Common myeloid progenitor, CD34-positive (primary cell): ENCODE measurements at regions of chr2 and their contacts with region 1.

Region 1: DNA sequence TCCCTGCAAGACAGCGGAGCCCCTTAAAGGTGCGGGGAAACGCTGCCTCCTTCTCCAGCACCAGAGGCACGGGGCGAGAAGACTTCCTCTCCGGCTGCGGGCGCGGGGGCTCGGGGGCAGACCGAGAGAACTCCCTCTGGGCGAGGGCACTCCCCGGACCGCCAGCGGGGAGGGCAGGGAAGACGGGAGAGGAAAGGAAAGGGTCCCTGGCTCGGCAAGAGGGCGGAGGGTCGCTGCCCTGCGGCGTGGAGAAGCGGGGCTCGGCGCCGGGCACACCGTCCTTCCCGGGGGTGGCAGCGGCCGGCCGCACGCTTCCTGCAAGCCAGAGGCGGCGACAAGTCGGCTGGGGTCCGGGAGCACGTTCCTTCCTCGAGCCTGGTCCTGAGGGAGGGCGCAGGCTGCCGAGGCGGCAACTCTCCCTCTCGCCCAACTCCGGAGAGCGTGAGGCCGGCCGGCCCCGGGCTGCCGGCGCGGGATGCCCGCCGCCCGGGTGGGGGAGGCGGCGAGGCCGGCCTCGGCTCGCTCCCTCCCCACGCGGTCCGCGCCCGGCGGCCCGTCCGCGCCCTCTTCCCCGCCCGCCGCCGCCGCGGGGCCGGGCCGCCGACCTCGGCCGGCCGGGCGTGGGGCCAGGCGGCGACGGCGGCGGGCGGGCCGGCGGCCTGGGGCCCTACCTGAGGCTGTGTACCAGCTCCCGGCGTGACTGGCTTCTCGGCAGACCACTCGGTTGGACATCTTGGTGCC is 1.1 kb downstream of the MEMO1 start:
- DNase-seq: peak in 2 of 3 donors; percentile 35 to 71
- H3K4me3 ChIP-seq: peak overlapping the region; percentile 84 to 92 (median 90)
- H3K27ac ChIP-seq: peak overlapping the region; percentile 58 to 87
- H3K4me1 ChIP-seq: peaks cover 24 to 29% (median 27%) of the 10 kb centered on the region in 4 experiments
- H3K27me3 ChIP-seq: no peaks in the 10 kb centered on the region

Region 2: DNA sequence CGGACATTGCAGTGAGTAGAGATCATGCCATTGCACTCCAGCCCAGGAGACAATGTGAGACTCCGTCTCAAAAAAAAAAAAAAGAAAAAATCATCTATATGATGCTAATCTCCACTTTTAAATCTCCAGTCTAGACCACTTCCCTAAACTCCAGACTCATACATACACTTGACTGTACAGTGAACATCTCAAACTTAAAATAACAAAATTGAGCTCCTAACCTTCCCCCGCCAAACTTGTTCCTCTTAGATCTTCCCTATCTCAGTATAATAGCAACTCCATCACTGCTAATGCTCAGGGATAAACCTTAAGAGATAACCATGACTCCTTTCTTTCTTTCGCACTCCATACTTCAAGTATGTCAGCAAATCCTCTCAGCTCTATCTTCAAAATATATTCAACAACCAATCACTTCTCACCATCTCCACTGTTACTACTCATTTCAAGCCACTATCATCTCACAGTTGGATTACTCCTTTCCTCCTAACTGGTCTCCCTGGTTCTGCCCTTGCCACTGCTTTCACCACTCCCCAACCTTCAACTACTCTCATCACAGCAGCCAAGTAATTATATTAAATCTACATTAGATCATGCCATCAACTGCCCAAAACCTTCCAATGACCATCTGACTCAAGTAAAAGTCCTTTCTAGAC is 10.8 kb before region 1 on chr2:
- CTCF ChIA-PET with region 1: interaction called, 13 read pairs
- POLR2A ChIA-PET with region 1: no interaction called
- DNase-seq: peak in 2 of 3 donors; percentile 55 to 72
- H3K4me3 ChIP-seq: no peak overlapping the region
- H3K27ac ChIP-seq: peak overlapping the region in 1 of 2 experiments; percentile 25
- H3K4me1 ChIP-seq: peaks cover 2 to 26% (median 7%) of the 10 kb centered on the region in 4 experiments
- H3K27me3 ChIP-seq: no peaks in the 10 kb centered on the region

Region 3: GRCh38 chr2:32166115-32166574 is 156.5 kb after region 1 on chr2:
- CTCF ChIA-PET with region 1: no interaction called
- POLR2A ChIA-PET with region 1: no interaction called
- DNase-seq: no peak
- H3K4me3 ChIP-seq: peak overlapping the region; percentile 91 to 98 (median 94)
- H3K27ac ChIP-seq: peak overlapping the region; percentile 80 to 94
- H3K4me1 ChIP-seq: peaks cover 2 to 14% (median 10%) of the 10 kb centered on the region in 4 experiments
- H3K27me3 ChIP-seq: no peaks in the 10 kb centered on the region

Region 4: DNA sequence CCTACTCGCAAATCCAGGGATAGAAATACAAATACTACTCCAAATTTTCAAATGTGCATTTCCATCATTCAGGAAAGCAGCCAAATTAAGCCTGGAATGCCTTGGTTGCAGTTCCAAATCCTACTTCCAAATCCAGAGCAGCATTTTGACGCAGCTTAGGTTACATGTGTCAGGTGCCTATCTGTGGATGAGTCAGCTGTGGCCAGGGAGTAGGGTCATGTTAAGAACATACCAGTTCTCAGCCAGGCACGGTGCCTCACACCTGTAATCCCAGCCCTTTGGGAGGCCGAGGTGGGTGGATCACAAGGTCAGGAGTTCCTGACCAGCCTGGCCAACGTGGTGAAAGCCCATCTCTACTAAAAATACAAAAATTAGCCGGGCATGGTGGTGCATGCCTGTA is 173.0 kb after region 1 on chr2:
- CTCF ChIA-PET with region 1: no interaction called
- POLR2A ChIA-PET with region 1: no interaction called
- DNase-seq: no peak
- H3K4me3 ChIP-seq: no peak overlapping the region
- H3K27ac ChIP-seq: no peak overlapping the region
- H3K4me1 ChIP-seq: no peaks in the 10 kb centered on the region
- H3K27me3 ChIP-seq: no peaks in the 10 kb centered on the region